Ascending aorta (tissue), 2 donors: ENCODE measurements at regions of chr13 and their contacts with region 1.

Region 1: GRCh38 chr13:29771247-29771646 is 79.2 kb downstream of the UBL3 start:
- DNase-seq: no peak
- H3K4me3 ChIP-seq: no peak overlapping the region
- H3K27ac ChIP-seq: no peak overlapping the region
- H3K4me1 ChIP-seq: no peaks in the 10 kb centered on the region
- H3K27me3 ChIP-seq: no peaks in the 10 kb centered on the region
- CTCF ChIP-seq: peak; percentile 16 to 49 (median 41)

Region 2: GRCh38 chr13:28401303-28402056 is 1369.8 kb before region 1 on chr13:
- intact Hi-C with region 1: no loop called
- DNase-seq: no peak
- H3K4me3 ChIP-seq: no peak overlapping the region
- H3K27ac ChIP-seq: no peak overlapping the region
- H3K4me1 ChIP-seq: no peaks in the 10 kb centered on the region
- H3K27me3 ChIP-seq: no peaks in the 10 kb centered on the region
- CTCF ChIP-seq: no peak

Region 3: DNA sequence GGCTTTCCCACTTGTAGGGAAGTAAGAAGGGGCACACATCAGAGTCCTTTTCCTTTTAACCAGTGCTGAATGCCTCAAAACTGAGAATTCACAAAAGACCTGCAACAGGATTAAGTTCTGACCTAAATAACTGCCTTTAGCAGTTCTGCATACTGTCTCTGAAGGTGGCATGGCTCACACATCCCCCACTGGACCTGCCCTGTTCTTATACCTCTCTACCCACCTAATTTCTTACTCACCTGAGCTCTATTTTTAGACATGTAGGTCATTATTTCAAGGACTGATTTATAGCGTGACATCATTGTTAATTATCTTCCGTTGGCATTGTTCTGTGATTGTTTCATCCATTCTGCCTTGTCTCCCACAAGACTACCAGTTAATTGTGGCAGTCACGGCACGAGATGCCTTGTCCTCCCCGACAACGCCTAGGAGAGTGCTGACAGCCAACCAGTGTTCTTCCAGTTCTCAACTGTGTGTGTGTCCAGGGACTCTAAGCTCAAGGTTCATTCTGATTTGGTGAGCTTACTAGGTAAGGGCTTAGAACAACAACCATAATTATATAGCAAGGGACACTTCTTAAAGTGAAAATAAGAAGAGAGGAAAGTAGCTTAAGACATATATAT is 106.3 kb after region 1 on chr13:
- intact Hi-C with region 1: no loop called
- DNase-seq: no peak
- H3K4me3 ChIP-seq: no peak overlapping the region
- H3K27ac ChIP-seq: no peak overlapping the region
- H3K4me1 ChIP-seq: no peaks in the 10 kb centered on the region
- H3K27me3 ChIP-seq: no peaks in the 10 kb centered on the region
- CTCF ChIP-seq: no peak

Region 4: GRCh38 chr13:30114571-30115256 is 343.5 kb after region 1 on chr13:
- intact Hi-C with region 1: loop called (anchors 1 kb)
- DNase-seq: peak; percentile 56 to 95
- H3K4me3 ChIP-seq: peak overlapping the region; percentile 75 to 76
- H3K27ac ChIP-seq: peak overlapping the region; percentile 54 to 60
- H3K4me1 ChIP-seq: peaks cover 0 to 10% of the 10 kb centered on the region in 2 donors
- H3K27me3 ChIP-seq: no peaks in the 10 kb centered on the region
- CTCF ChIP-seq: peak; percentile 84 to 95 (median 88)